GM12878 (cell line): ENCODE measurements at regions of chr6 and their contacts with region 1.

Region 1: DNA sequence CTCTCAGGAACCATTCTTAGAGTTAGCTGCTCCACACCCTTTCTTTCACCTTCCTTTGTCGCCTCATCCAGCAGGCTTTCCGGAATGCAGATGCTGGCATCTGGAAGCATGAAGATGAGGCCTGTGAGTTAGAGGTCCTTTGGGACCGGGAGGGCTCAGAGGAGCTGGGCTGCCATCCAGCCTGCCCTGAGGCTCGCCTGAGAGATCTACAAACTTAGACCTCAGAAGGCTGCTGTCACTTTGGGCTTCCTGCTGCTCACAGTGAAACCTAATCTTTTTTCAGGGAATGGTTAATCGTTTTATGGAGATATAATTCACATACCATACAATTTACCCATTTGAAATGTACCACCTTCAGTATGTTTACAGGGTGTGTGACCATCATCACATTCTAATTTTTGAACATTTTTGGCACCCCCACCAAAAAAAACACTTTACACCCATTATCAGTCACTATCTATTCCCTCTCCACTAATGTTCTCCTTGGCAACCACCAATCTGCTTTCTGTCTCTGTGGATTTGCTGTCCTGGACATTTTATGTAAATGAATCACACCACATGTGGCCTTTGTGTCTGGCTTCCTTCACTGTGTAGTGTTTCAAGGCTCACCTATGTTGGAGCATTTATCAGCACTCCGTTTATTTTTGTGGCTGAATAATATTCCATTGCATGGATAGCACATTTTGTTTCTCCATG is 20.0 kb upstream of the MPC1 start:
- DNase-seq: no peak
- ATAC-seq: no peak
- H3K4me3 ChIP-seq: no peak overlapping the region
- H3K27ac ChIP-seq: no peak overlapping the region
- H3K4me1 ChIP-seq: no peaks in the 10 kb centered on the region
- H3K27me3 ChIP-seq: no peaks in the 10 kb centered on the region
- CTCF ChIP-seq: no peak
- EP300 ChIP-seq: no peak
- POLR2A ChIP-seq: no peak
- RAD21 ChIP-seq: no peak

Region 2: GRCh38 chr6:166173281-166173951 is 229.3 kb before region 1 on chr6:
- CTCF ChIA-PET with region 1: no interaction called
- POLR2A ChIA-PET with region 1: no interaction called
- RAD21 ChIA-PET with region 1: no interaction called
- SMC1A ChIA-PET with region 1: no interaction called
- in situ Hi-C with region 1: no loop called
- intact Hi-C with region 1: loop called (anchors 10 kb)
- DNase-seq: peak; percentile 68
- ATAC-seq: peak; percentile 40; the same call in 2 of the 3 replicates
- H3K4me3 ChIP-seq: peak overlapping the region; percentile 17; the same call in 1 of the 2 replicates
- H3K27ac ChIP-seq: peak overlapping the region; percentile 71
- H3K4me1 ChIP-seq: peaks cover 4% of the 10 kb centered on the region
- H3K27me3 ChIP-seq: peaks cover 3 to 10% of the 10 kb centered on the region in 2 experiments; a peak in 3 of 4 replicates
- CTCF ChIP-seq: no peak
- EP300 ChIP-seq: no peak
- POLR2A ChIP-seq: no peak
- RAD21 ChIP-seq: no peak

Region 3: GRCh38 chr6:166286839-166287271 is 115.9 kb before region 1 on chr6:
- CTCF ChIA-PET with region 1: interaction called, 33 read pairs
- POLR2A ChIA-PET with region 1: no interaction called
- RAD21 ChIA-PET with region 1: interaction called, 12 read pairs
- SMC1A ChIA-PET with region 1: interaction called, 24 read pairs
- in situ Hi-C with region 1: no loop called
- intact Hi-C with region 1: no loop called
- DNase-seq: peak; percentile 83
- ATAC-seq: peak; percentile 97
- H3K4me3 ChIP-seq: no peak overlapping the region
- H3K27ac ChIP-seq: peak overlapping the region; percentile 67
- H3K4me1 ChIP-seq: peaks cover 9% of the 10 kb centered on the region
- H3K27me3 ChIP-seq: no peaks in the 10 kb centered on the region
- CTCF ChIP-seq: no peak
- EP300 ChIP-seq: no peak
- POLR2A ChIP-seq: peak; percentile 56
- RAD21 ChIP-seq: no peak

Region 4: DNA sequence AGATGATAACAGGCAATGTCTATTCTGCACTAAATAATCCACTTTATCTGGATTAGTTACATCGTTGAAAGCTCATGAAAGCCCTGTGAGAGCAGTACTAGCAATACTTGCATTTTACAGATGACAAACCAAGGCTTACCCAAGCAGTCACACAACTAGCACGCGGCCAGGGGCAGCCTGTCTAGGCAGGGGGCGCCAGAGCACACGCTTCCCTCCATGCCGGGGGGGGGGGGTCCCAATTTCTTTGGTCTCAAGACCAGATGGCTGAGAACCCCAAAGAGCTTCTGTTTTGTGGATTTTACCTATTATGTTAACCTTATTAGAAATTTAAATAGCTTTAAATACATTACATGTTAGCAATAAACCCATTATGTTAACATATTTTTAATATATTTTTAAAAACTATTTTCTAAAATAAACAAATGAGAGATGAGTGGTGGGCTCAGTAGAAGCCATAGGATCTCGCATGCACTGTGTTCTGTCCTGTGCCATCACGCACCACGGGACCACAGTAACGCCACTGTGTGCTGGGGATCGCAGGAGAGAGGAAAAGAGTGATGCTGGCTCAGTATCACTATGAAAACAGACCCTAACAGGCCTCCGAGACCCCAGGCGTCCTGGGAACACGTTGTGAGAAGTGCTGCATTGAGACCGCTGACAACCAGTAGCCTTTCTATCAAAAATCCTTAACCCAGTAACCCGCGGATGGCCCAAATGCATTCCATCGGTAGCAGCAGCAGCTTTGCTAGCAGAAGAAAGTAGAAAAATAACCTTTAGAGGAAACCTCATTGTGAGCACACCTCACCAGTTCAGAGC is 89.3 kb before region 1 on chr6:
- CTCF ChIA-PET with region 1: interaction called, 317 read pairs
- POLR2A ChIA-PET with region 1: interaction called, 4 read pairs
- RAD21 ChIA-PET with region 1: interaction called, 165 read pairs
- SMC1A ChIA-PET with region 1: interaction called, 72 read pairs
- in situ Hi-C with region 1: no loop called
- intact Hi-C with region 1: loop called (anchors 1 kb)
- DNase-seq: peak; percentile 44
- ATAC-seq: peak; percentile 97
- H3K4me3 ChIP-seq: no peak overlapping the region
- H3K27ac ChIP-seq: no peak overlapping the region
- H3K4me1 ChIP-seq: no peaks in the 10 kb centered on the region
- H3K27me3 ChIP-seq: no peaks in the 10 kb centered on the region; a peak in 1 of 4 replicates
- CTCF ChIP-seq: peak; percentile 90 to 91 (median 91)
- EP300 ChIP-seq: no peak
- POLR2A ChIP-seq: no peak
- RAD21 ChIP-seq: peak; percentile 91

Region 5: GRCh38 chr6:166375013-166375412 is 27.7 kb before region 1 on chr6:
- CTCF ChIA-PET with region 1: interaction called, 63 read pairs
- POLR2A ChIA-PET with region 1: no interaction called
- RAD21 ChIA-PET with region 1: interaction called, 16 read pairs
- SMC1A ChIA-PET with region 1: interaction called, 10 read pairs
- in situ Hi-C with region 1: no loop called
- intact Hi-C with region 1: no loop called
- DNase-seq: no peak
- ATAC-seq: no peak
- H3K4me3 ChIP-seq: no peak overlapping the region
- H3K27ac ChIP-seq: no peak overlapping the region
- H3K4me1 ChIP-seq: no peaks in the 10 kb centered on the region
- H3K27me3 ChIP-seq: no peaks in the 10 kb centered on the region
- CTCF ChIP-seq: no peak
- EP300 ChIP-seq: no peak
- POLR2A ChIP-seq: no peak
- RAD21 ChIP-seq: no peak